ENCODE measurements at regions of chr4 and their contacts with region 1.

Region 1: DNA sequence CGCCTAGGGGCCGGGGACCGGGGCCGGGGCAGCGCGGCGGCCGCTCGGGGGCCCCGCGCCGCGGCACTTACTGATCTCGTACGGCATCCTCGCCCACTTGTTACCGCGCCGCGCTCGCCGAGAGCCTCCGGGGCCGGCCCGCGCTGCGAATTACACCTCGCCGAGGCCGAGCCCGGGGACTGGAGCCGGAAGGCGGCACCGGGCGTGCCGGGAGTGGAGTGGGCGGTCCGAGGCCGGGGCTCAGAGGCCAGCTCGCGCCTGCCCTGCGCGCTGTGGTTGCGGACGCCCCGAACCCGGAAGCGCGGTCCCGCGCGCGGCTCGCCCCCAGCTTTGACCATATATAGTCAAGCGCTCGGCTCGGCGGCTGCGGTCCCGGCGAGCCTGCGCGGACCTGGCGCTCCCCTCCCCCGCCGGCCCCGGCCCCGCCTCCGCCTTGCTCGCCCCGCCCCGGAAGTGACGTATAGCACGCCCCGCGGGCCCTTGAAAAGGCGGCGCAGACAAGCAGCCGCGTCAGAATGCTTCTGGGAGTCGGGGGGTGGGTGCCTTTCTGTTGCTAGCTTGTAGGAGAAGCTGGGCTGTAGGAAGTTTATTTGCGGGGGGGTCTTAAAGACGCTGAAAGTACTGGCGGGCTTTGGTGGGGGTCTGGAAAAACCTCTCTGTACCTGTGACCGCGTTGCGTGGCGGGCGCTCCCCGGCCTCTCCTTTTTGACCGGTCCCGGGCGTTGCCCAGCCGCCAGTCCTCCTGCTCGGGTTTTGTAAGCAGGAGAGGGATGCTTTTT is at the start of gene WDR1:
- DNase-seq: peak; percentile 86 to 98
- H3K4me3 ChIP-seq: peak within 1 kb of the TSS; percentile 61 to 82
- H3K27ac ChIP-seq: peak within 1 kb of the TSS; percentile 93 to 95
- H3K4me1 ChIP-seq: peaks cover 19 to 43% of the 10 kb centered on the region in 2 donors
- H3K27me3 ChIP-seq: no peaks in the 10 kb centered on the region
- CTCF ChIP-seq: peak in 1 of 3 experiments; percentile 4
- total RNA-seq, gene WDR1: 216 TPM

Region 2: GRCh38 chr4:9691238-9692065 is 425.3 kb before region 1 on chr4:
- intact Hi-C with region 1: loop called (anchors 1 kb)
- DNase-seq: peak; percentile 87 to 98
- H3K4me3 ChIP-seq: peak overlapping the region; percentile 56 to 74
- H3K27ac ChIP-seq: peak overlapping the region; percentile 60 to 66
- H3K4me1 ChIP-seq: no peaks in the 10 kb centered on the region
- H3K27me3 ChIP-seq: no peaks in the 10 kb centered on the region
- CTCF ChIP-seq: no peak

Region 3: GRCh38 chr4:10018818-10019461 is 97.8 kb before region 1 on chr4:
- intact Hi-C with region 1: loop called (anchors 1 kb)
- DNase-seq: peak; percentile 95 to 98
- H3K4me3 ChIP-seq: peak overlapping the region; percentile 65 to 66
- H3K27ac ChIP-seq: peak overlapping the region; percentile 90 to 92
- H3K4me1 ChIP-seq: peaks cover 0 to 9% of the 10 kb centered on the region in 2 donors
- H3K27me3 ChIP-seq: no peaks in the 10 kb centered on the region
- CTCF ChIP-seq: peak; percentile 99 to 100 (median 99)

Region 4: GRCh38 chr4:10079912-10080588 is 36.7 kb before region 1 on chr4:
- intact Hi-C with region 1: loop called (anchors 5 kb)
- DNase-seq: peak in 1 of 2 donors; percentile 58
- H3K4me3 ChIP-seq: no peak overlapping the region
- H3K27ac ChIP-seq: peak overlapping the region in 1 of 2 donors; percentile 29
- H3K4me1 ChIP-seq: peaks cover 0 to under 1% of the 10 kb centered on the region in 2 donors
- H3K27me3 ChIP-seq: no peaks in the 10 kb centered on the region
- CTCF ChIP-seq: no peak

Region 5: GRCh38 chr4:10096201-10096977 is 20.4 kb before region 1 on chr4:
- intact Hi-C with region 1: loop called (anchors 1 kb)
- DNase-seq: peak; percentile 75 to 89
- H3K4me3 ChIP-seq: no peak overlapping the region
- H3K27ac ChIP-seq: peak overlapping the region; percentile 80 to 93
- H3K4me1 ChIP-seq: peaks cover 69 to 88% of the 10 kb centered on the region in 2 donors
- H3K27me3 ChIP-seq: no peaks in the 10 kb centered on the region
- CTCF ChIP-seq: no peak

Region 6: DNA sequence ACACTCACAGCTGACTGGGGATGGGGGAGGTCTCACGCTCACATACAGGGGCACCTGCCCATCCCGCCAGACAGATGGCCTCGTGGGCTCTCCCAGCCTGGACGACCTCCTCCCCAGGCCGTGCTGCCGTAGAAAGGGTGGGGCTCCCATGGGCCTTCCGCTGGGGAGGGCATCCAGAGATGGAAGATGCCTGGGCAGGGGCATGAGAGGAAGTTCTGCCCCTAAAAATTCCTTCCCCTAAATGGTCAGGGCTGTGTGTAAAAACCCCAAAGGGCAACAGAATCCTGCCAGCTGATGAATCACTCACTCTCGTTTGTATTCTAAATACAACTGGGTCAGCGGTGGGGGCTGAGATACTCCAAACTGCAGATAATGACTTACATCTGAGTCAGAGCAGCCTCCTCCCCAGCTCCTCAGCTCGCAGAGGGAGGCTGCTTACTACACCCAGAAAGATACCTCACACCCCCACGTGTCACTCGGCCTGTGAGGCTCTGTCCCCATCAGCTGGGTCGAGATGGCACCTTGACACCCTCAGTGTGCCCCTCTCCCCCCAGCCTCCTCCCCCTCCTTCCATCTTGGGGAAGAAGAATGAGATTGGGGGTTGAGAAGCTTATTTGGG is 10.2 kb before region 1 on chr4:
- intact Hi-C with region 1: loop called (anchors 1 kb)
- DNase-seq: peak; percentile 83 to 97
- H3K4me3 ChIP-seq: peak overlapping the region; percentile 32 to 48
- H3K27ac ChIP-seq: peak overlapping the region; percentile 89 to 93
- H3K4me1 ChIP-seq: peaks cover 59 to 97% of the 10 kb centered on the region in 2 donors
- H3K27me3 ChIP-seq: no peaks in the 10 kb centered on the region
- CTCF ChIP-seq: no peak

Region 7: DNA sequence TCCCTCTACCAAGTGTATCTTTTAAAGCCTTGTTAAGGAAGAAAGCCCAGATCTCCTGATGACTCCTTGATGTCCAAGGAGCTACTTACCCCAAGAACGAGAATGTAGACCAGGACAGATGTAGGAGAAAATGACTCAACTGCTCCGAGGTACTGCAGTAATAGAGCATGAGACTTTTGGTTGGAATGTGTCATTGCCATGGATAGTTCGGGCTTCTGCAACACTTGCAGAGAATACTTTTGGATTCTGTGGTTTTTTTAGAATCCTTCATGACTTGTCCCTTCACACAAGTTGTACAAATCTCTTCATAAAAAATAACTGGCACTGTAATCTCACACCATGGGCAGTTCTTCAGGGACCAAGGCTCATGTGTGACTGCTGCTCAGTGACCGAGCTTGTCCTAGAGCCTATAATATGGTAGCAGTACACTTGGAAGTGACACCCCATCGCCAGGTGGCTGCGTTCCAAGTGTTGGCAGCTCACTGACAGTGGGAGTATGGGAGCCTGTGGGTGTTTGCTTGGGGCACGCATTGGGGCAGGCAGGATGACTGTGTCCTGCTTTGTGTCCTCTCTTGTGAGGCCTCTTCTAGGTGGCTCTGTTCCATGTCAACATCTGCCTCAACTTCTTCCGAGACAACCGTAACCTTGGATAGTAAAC is 87.8 kb after region 1 on chr4:
- intact Hi-C with region 1: no loop called
- DNase-seq: no peak
- H3K4me3 ChIP-seq: no peak overlapping the region
- H3K27ac ChIP-seq: no peak overlapping the region
- H3K4me1 ChIP-seq: no peaks in the 10 kb centered on the region
- H3K27me3 ChIP-seq: no peaks in the 10 kb centered on the region
- CTCF ChIP-seq: no peak

Region 8: DNA sequence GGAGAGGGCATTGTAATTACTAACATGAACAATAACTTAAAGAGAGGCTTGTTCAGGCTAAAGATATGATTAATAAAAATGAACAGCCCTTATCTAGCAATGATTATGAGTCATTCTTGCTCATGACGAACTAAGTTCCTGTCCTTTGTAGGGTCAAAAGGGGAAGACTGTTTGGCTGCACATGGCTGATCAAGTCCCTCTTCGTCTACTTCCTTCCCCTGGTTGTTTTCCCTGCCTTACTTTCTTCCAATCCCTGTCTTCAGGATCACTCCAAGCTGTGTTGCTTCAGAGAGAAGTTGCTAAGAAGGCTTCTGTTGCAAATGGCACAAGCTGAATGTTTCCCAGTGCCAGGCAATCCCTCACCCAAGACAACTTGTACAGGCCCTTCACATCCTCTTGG is 1426.9 kb after region 1 on chr4:
- intact Hi-C with region 1: no loop called
- DNase-seq: no peak
- H3K4me3 ChIP-seq: no peak overlapping the region
- H3K27ac ChIP-seq: no peak overlapping the region
- H3K4me1 ChIP-seq: no peaks in the 10 kb centered on the region
- H3K27me3 ChIP-seq: no peaks in the 10 kb centered on the region
- CTCF ChIP-seq: no peak

Measured in ascending aorta (tissue), 2 donors.